CD4-positive, alpha-beta T cell (primary cell): ENCODE measurements at regions of chr7 and their contacts with region 1.

Region 1: GRCh38 chr7:43700059-43700501 is 29.2 kb downstream of the COA1 start:
- DNase-seq: peak in 3 of 14 experiments; percentile 77 to 80 (median 80)
- ATAC-seq: peak; percentile 76
- H3K4me3 ChIP-seq: no peak overlapping the region
- H3K4me3 Mint-ChIP-seq: peak overlapping the region; percentile 52
- H3K27ac ChIP-seq: peak overlapping the region in 1 of 2 donors; percentile 4
- H3K27ac Mint-ChIP-seq: peak overlapping the region; percentile 66
- H3K4me1 ChIP-seq: peaks cover 6% of the 10 kb centered on the region
- H3K4me1 Mint-ChIP-seq: peaks cover 58% of the 10 kb centered on the region
- H3K27me3 ChIP-seq: no peaks in the 10 kb centered on the region
- H3K27me3 Mint-ChIP-seq: no peaks in the 10 kb centered on the region
- CTCF ChIP-seq: peak; percentile 83

Region 2: DNA sequence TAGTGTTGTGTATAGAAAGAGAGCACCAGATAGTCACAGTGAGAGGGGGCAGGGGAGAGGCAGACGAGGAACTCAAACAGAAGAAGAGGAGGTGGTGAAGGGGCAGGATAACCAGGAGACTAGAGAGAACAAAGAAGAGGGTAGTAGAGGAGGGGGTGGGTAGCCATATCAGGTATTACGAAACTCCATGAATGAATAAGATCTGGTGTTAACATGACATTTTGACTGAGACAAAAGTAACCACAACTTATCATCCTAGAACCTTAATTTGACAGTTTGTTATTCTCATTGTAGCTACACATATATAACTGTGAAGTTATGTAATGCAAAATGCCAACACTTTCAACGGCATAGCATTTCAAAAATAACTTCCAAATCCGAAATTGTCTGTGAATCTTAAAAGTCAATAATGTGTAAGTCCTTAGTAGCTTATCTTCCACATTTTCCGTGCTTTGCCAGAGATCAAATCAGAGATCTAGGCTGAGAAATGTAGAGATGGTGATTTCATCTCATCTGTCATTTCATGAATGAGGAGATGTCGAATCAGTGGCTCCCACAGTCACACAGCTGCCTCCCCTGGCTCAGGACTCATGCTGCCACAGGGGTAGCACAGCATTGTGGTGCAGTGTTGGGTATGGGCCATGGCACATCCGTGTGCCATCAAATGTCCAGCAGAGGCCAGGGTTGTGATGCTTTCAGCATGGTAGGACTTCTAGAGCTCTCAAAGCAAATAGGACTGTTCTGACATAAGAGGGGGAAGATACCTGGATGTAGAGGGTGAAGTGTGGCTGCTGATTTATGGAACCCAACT is 385.5 kb before region 1 on chr7:
- CTCF ChIA-PET with region 1: no interaction called
- POLR2A ChIA-PET with region 1: no interaction called
- intact Hi-C with region 1: no loop called
- DNase-seq: no peak
- ATAC-seq: no peak
- H3K4me3 ChIP-seq: no peak overlapping the region
- H3K4me3 Mint-ChIP-seq: no peak overlapping the region
- H3K27ac ChIP-seq: no peak overlapping the region
- H3K27ac Mint-ChIP-seq: no peak overlapping the region
- H3K4me1 ChIP-seq: peaks cover 9% of the 10 kb centered on the region
- H3K4me1 Mint-ChIP-seq: peaks cover 10% of the 10 kb centered on the region
- H3K27me3 ChIP-seq: peaks cover 0 to 2% of the 10 kb centered on the region in 2 experiments
- H3K27me3 Mint-ChIP-seq: no peaks in the 10 kb centered on the region
- CTCF ChIP-seq: no peak

Region 3: GRCh38 chr7:43625453-43625852 is 74.6 kb before region 1 on chr7:
- CTCF ChIA-PET with region 1: interaction called, 18 read pairs
- POLR2A ChIA-PET with region 1: interaction called, 22 read pairs
- intact Hi-C with region 1: loop called in 1 of 2 experiments (anchors 5 kb)
- DNase-seq: peak in 8 of 14 experiments; percentile 27 to 85 (median 52)
- ATAC-seq: peak; percentile 69
- H3K4me3 ChIP-seq: no peak overlapping the region
- H3K4me3 Mint-ChIP-seq: peak overlapping the region; percentile 59
- H3K27ac ChIP-seq: peak overlapping the region; percentile 35 to 45
- H3K27ac Mint-ChIP-seq: no peak overlapping the region
- H3K4me1 ChIP-seq: peaks cover 35% of the 10 kb centered on the region
- H3K4me1 Mint-ChIP-seq: peaks cover 97% of the 10 kb centered on the region
- H3K27me3 ChIP-seq: no peaks in the 10 kb centered on the region
- H3K27me3 Mint-ChIP-seq: no peaks in the 10 kb centered on the region
- CTCF ChIP-seq: no peak

Region 4: DNA sequence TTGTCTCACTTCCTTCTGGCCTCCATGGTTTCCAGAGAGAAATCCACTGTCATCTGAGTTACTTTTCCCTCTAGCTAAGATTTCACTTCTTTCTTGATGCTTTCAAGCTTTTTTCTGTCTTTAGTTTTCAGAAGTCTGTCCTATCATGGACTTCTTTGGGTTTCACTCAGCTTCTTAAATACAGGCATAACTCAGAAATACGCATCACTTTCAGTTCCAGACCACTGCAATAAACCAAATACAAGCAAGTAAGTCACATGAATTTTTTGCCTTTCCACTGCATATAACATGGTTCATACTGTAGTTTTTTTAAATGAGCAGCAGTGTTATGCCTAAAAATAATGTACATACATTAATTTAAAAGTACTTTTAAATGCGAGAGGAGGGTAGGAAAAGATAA is 68.5 kb before region 1 on chr7:
- CTCF ChIA-PET with region 1: interaction called, 12 read pairs
- POLR2A ChIA-PET with region 1: interaction called, 7 read pairs
- intact Hi-C with region 1: loop called in 1 of 2 experiments (anchors 5 kb)
- DNase-seq: no peak
- ATAC-seq: peak; percentile 40
- H3K4me3 ChIP-seq: no peak overlapping the region
- H3K4me3 Mint-ChIP-seq: peak overlapping the region; percentile 70
- H3K27ac ChIP-seq: no peak overlapping the region
- H3K27ac Mint-ChIP-seq: no peak overlapping the region
- H3K4me1 ChIP-seq: peaks cover 38% of the 10 kb centered on the region
- H3K4me1 Mint-ChIP-seq: peaks cover 95% of the 10 kb centered on the region
- H3K27me3 ChIP-seq: no peaks in the 10 kb centered on the region
- H3K27me3 Mint-ChIP-seq: no peaks in the 10 kb centered on the region
- CTCF ChIP-seq: no peak

Region 5: DNA sequence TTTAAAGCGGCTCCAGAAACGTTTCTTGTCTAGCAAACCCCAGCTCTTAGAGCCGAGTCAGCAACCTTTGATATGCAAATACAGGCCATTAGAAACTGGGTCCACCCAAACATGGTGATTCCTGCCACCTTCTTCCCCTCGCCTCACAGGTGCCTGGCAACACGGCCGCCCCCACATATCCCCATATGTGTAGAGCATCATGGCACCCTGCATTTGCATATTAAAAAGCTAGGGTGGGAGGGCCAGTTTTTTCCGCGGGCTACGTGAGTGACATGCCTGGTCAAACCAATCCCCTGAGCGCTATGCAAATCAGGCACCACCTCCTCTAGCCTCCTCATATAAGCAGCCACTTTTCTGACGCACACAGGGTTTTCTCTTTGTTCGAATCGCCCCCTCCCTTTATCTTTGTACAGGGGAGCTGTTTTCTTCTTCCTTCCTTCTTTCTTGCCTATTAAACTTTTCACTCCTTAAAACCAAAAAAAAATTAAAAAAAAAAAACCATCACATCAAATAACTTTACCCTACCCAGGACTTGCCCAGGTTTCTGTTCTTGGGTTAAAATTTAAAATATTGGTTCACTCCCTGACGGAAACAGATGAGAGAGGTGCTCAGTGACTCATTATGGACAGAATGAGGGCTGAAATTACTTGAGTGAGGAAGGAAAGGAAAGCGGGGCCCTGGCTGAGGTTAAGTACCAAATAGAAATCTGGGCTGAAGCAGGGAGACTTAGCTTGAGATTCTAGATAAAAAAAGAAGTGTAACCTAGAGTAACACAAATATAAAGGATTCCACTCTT is 30.6 kb before region 1 on chr7:
- CTCF ChIA-PET with region 1: interaction called, 15 read pairs
- POLR2A ChIA-PET with region 1: no interaction called
- intact Hi-C with region 1: no loop called
- DNase-seq: peak; percentile 42 to 92 (median 56)
- ATAC-seq: peak; percentile 82
- H3K4me3 ChIP-seq: peak overlapping the region; percentile 37
- H3K4me3 Mint-ChIP-seq: peak overlapping the region; percentile 82
- H3K27ac ChIP-seq: peak overlapping the region in 1 of 2 donors; percentile 75
- H3K27ac Mint-ChIP-seq: peak overlapping the region; percentile 86
- H3K4me1 ChIP-seq: peaks cover 22% of the 10 kb centered on the region
- H3K4me1 Mint-ChIP-seq: peaks cover 88% of the 10 kb centered on the region
- H3K27me3 ChIP-seq: no peaks in the 10 kb centered on the region
- H3K27me3 Mint-ChIP-seq: no peaks in the 10 kb centered on the region
- CTCF ChIP-seq: no peak

Region 6: GRCh38 chr7:43721193-43721806 is 21.2 kb after region 1 on chr7:
- CTCF ChIA-PET with region 1: interaction called, 14 read pairs
- POLR2A ChIA-PET with region 1: no interaction called
- intact Hi-C with region 1: loop called (anchors 1 to 2 kb)
- DNase-seq: peak in 4 of 14 experiments; percentile 25 to 78 (median 74)
- ATAC-seq: peak; percentile 48
- H3K4me3 ChIP-seq: no peak overlapping the region
- H3K4me3 Mint-ChIP-seq: no peak overlapping the region
- H3K27ac ChIP-seq: no peak overlapping the region
- H3K27ac Mint-ChIP-seq: peak overlapping the region; percentile 0
- H3K4me1 ChIP-seq: peaks cover 8% of the 10 kb centered on the region
- H3K4me1 Mint-ChIP-seq: peaks cover 71% of the 10 kb centered on the region
- H3K27me3 ChIP-seq: no peaks in the 10 kb centered on the region
- H3K27me3 Mint-ChIP-seq: no peaks in the 10 kb centered on the region
- CTCF ChIP-seq: peak; percentile 96

Region 7: DNA sequence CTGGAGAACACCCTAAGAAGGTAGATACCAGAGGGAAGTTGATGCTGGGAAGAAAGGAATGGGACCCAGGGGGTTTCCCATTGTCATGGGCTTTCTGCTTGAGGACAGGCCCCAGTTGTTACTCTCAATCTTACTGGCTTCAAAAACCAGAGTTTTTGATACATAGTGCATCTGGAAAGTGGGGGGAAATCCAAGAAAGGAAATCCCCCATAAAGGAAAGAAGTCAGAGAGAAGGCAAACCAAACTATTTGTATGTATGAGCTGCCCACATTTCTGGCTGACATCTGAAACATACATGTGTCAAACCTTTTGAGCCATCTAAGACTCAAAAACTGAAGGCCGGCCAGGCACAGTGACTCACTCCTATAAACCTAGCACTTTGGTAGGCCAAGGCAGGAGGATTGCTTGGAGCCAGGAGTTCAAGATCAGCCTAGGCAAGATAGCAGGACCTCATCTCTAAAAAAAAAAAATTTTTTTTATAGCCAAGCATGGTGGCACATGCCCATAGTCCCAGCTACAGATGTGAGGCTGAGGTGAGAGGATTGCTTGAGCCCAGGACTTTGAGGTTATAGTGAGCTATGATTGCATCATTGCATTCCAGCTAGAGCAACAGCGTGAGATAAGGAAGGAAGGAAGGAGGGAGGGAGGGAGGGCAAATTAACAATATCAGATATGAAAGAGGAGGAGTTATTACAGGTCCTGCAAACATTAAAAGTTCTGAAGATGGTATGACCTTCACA is 35.9 kb after region 1 on chr7:
- CTCF ChIA-PET with region 1: no interaction called
- POLR2A ChIA-PET with region 1: no interaction called
- intact Hi-C with region 1: no loop called
- DNase-seq: peak in 2 of 14 experiments; percentile 31 to 39
- ATAC-seq: no peak
- H3K4me3 ChIP-seq: no peak overlapping the region
- H3K4me3 Mint-ChIP-seq: no peak overlapping the region
- H3K27ac ChIP-seq: no peak overlapping the region
- H3K27ac Mint-ChIP-seq: no peak overlapping the region
- H3K4me1 ChIP-seq: peaks cover 2% of the 10 kb centered on the region
- H3K4me1 Mint-ChIP-seq: no peaks in the 10 kb centered on the region
- H3K27me3 ChIP-seq: no peaks in the 10 kb centered on the region
- H3K27me3 Mint-ChIP-seq: no peaks in the 10 kb centered on the region
- CTCF ChIP-seq: no peak